B cell (primary cell): ENCODE measurements at regions of chr5 and their contacts with region 1.

Region 1: DNA sequence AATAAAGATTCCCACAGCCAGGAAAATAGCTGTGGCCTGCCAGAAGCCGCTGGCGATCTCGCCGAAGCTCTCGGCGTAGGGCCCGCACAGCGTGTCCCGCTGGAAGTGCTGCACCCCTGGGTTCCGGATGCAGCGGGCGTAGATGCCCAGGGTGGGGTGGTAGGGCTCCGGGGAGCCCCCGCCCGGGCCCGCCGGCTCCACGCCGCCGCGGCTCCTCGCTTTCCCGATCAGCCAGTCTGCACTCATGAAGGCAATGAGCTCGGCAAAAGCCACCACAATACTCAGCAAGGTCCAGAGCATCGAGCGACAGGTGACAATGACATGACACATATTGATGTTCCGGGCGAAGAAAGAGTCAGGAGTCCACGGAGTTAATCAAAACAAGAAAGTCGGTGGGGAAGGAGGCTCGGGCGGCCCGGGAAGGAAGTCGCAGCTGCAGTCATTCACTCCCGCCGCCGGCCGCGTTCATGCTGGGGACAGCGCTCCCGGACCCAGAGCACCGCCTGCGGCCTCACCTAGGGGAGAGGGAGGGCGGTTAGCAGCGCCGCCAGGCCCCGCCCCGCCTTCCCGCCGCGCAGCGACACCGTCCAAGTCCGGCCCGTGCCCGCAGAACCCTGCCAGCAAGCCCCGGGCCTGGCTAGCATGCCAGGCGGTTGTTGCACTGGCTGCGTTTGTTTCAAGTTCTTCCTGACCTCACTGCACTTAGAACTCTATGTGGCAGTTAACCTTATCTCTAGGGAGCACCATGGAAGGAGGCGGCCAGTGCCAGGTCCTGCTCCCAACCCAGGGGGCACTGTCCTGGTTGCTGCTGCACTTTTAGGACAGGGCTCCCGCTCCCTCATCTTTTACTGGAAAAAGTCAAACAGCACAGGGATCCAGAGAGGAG is 138.4 kb downstream of the LHFPL2 start:
- DNase-seq: peak; percentile 54
- ATAC-seq: peak; percentile 84
- H3K4me3 ChIP-seq: peak overlapping the region; percentile 37 to 70 (median 58)
- H3K4me3 Mint-ChIP-seq: peak overlapping the region; percentile 94
- H3K27ac ChIP-seq: no peak overlapping the region
- H3K27ac Mint-ChIP-seq: peak overlapping the region; percentile 4
- H3K4me1 ChIP-seq: peaks cover 25% of the 10 kb centered on the region in 2 donors
- H3K4me1 Mint-ChIP-seq: peaks cover 34% of the 10 kb centered on the region
- H3K27me3 ChIP-seq: peaks cover 0 to 13% (median 5%) of the 10 kb centered on the region in 4 experiments
- H3K27me3 Mint-ChIP-seq: no peaks in the 10 kb centered on the region
- CTCF ChIP-seq: no peak

Region 2: GRCh38 chr5:78483809-78484521 is 26.2 kb before region 1 on chr5:
- CTCF ChIA-PET with region 1: no interaction called
- POLR2A ChIA-PET with region 1: no interaction called
- intact Hi-C with region 1: loop called (anchors 2 kb)
- DNase-seq: peak; percentile 71
- ATAC-seq: peak; percentile 98
- H3K4me3 ChIP-seq: no peak overlapping the region
- H3K4me3 Mint-ChIP-seq: peak overlapping the region; percentile 33
- H3K27ac ChIP-seq: no peak overlapping the region
- H3K27ac Mint-ChIP-seq: peak overlapping the region; percentile 2
- H3K4me1 ChIP-seq: peaks cover 15 to 18% of the 10 kb centered on the region in 2 donors
- H3K4me1 Mint-ChIP-seq: peaks cover 22% of the 10 kb centered on the region
- H3K27me3 ChIP-seq: no peaks in the 10 kb centered on the region
- H3K27me3 Mint-ChIP-seq: no peaks in the 10 kb centered on the region
- CTCF ChIP-seq: no peak

Region 3: DNA sequence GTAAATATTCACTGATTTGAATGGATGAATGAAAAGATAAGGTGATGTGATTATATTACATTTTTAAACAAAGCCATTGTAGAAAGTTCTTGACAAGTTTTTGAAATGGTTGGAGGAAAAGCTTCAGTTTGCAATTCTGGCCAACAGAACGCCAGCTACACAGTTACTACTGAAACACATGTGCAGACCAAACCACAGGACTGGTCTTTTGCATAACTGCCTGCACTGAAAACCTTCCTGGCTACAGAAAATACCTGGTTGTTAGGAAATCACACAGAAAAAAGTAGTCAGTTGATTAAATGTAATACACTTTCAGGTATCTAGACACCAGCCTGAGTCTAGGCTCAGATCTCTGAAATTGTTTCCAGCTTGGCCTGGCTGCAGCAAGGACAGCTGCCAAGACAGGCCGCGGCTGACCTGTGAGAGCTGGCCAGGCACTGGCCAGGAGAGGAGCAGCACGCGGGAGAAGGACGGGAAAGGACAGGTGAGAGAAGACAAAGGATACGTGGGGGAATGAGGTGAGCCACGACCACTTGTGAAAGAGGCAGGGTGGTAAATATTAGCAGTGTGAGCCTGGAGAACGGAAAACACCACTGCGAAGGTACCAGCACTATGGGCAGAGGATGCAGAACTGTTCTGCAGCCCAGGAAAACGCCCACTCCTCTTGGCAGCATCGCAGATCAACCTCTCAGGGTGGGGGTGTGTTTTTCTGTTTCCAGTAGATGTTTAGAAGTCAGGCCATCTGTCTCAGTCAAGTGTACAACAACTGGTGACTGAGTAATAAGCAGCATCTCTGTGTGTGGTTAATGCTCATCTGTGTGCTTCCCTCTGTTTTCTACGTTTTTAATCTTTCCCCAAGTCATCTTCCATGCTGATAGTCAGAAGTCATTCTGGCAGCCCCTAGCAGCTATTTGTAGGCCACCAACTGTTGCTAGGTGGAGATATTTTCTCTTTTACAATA is 12.3 kb before region 1 on chr5:
- CTCF ChIA-PET with region 1: no interaction called
- POLR2A ChIA-PET with region 1: no interaction called
- intact Hi-C with region 1: no loop called
- DNase-seq: no peak
- ATAC-seq: no peak
- H3K4me3 ChIP-seq: no peak overlapping the region
- H3K4me3 Mint-ChIP-seq: no peak overlapping the region
- H3K27ac ChIP-seq: no peak overlapping the region
- H3K27ac Mint-ChIP-seq: no peak overlapping the region
- H3K4me1 ChIP-seq: peaks cover 10 to 13% of the 10 kb centered on the region in 2 donors
- H3K4me1 Mint-ChIP-seq: peaks cover 45% of the 10 kb centered on the region
- H3K27me3 ChIP-seq: no peaks in the 10 kb centered on the region
- H3K27me3 Mint-ChIP-seq: no peaks in the 10 kb centered on the region
- CTCF ChIP-seq: no peak